ENCODE measurements at regions of chr18 and their contacts with region 1.

Region 1: DNA sequence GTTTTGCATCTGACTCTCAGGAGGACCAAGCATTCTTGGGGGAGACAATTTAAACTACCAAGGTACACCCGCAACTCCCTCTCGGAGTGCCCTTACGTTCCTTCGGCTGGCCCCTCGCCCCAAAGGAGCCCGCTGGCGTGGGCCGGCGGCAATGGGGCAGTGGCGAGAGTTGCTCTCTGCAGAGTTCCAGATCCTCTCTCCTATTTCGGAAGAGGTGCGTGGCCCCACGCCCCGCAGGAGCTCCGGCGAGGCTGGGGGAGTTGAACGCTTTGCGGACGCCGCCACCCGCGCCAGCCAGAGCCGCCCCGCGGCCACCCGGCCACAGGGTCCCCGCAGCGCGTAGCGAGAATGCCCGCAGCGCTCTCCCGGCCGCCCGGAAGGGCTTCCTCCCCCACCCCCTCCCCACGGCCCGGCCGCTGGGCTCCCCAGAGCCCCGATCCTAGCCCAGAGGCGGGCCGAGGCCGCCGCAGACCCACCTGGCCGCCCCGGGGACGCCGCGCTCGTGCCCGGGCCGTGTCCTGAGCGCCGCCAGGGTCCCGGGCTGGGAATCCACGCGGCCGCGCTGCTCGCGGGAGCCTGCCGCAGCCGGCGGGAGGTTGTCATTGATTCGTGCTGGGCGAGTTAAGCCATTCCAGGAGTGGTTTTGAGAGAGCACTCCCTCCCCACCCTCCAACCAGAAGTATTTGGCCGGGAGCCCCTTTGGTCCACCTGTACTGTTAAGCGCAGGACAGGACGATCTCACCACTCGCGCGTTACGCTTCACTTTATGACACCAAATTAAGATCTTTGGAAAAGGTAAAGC is 206.3 kb upstream of the SMAD2 start:
- DNase-seq: no peak
- ATAC-seq: peak; percentile 16

Region 2: DNA sequence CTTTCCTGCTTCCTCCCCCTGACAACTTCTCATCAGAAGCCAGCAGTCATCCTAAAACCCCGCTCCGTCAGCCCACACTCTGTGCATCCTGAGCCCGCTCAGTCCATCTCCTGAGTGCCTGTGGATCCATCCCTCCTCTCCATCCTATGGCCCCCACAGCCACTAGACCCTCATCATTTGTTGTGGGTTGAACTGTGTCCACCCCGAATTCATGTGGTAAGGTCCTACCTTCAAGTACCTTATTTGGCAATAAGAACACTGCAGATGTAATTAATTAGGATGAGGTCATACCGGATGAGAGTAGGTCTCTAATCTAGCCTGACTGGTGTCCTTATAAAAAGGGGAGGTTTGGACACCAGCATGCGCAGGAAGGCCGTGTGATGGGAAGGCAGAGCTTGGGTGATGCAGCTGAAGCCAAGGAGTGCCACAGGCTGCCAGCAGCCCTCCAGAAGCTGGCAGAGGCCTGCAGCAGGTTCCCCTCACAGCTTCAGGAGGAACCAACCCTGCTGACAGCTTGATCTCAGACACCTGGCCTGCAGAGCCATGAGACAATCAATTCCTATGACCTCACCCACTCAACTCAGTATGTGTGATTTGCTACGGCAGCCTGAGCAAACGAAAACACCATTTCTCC is 80.0 kb after region 1 on chr18:
- intact Hi-C with region 1: loop called (anchors 5 kb)
- DNase-seq: peak; percentile 56
- ATAC-seq: peak; percentile 78

Measured in Right ventricle myocardium inferior (tissue), 1 donor.